ENCODE measurements at regions of chr20 and their contacts with region 1.

Region 1: DNA sequence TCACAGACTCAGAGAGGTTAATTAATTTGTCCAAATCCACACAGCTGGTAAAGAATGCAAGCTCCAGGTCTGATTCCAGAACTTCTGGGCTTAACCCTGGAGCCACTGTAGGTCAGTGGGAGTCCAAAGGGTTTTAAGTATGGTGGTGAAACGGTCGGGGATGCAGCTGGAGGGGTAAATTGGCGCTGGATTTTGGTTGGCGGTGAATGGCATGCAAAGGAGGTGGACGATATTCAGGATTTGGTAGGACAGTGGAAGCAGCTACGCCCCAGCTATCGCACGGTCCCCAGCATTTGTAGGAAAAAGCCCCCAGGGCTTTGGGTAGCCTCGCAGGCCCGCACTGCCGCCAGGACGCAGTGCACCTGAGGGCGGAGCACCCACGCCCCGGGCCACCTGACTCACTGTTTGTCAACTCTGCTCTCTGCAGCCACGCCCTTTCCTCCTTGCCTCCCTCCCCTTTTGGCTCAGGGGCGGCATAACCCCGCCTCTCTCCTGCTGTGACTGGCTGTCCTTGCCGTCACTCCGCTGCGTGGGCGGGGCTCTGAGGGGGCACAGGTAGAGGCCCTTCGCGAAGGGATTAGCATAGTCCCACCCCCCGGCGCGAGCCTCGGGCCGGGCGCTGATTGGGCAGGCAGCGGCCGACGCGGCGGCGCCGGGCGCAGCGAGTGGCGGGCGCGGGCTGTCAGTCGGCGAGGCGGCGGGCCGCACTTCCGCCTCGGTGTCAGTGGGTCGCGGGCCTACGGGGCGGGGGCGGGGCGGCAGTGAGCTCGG is at the start of gene OSBPL2:
- DNase-seq: peak; percentile 97 to 99 (median 99)
- H3K4me3 ChIP-seq: peak within 1 kb of the TSS; percentile 64 to 82 (median 70)
- H3K4me3 Mint-ChIP-seq: peak within 1 kb of the TSS; percentile 82 to 93
- H3K27ac ChIP-seq: peak within 1 kb of the TSS; percentile 32 to 79
- H3K27ac Mint-ChIP-seq: peak within 1 kb of the TSS; percentile 71 to 93 (median 83)
- H3K4me1 ChIP-seq: peaks cover 28 to 38% of the 10 kb centered on the region in 2 donors
- H3K4me1 Mint-ChIP-seq: peaks cover 34% of the 10 kb centered on the region
- H3K27me3 ChIP-seq: no peaks in the 10 kb centered on the region
- H3K27me3 Mint-ChIP-seq: peaks cover 1 to 3% (median 2%) of the 10 kb centered on the region in 3 donors
- CTCF ChIP-seq: no peak
- polyA plus RNA-seq, gene OSBPL2: 12.9 to 29.1 (median 17.9) TPM

Region 2: DNA sequence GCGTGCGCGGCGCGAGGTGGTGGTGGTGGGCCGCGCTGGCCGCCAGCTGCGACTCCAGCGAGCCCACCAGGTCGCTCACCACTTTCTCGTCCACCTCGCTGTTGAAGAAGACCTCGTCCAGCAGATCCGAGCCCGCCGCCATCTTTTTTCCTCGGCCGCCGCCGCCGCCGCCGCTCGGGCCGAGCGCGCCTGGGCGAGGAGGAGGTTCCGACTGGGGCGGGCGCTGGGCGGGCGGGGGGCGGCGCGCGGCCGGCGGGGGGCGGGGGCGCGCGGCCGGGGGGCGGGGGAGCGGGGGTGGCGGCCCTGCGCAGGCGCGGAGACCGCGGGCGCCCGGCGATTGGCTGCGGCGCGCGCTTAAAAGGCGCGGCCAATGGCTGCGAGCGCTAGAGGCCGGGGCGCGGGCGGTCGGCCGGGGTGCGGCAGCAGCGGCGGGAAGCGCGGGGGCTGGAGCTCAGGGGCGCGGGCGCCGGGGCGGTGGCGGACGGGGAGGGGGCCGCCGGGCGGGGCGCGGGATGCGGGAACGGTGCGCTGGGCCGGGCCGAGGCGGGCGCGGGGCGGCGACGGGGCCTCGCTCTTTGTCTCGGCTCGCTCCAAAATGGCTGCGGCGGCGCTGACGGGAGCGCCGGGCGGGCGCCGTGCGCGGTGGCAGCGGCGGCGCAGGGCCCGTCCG is 172.2 kb before region 1 on chr20 and contains the start of gene TAF4:
- intact Hi-C with region 1: loop called in 1 of 2 experiments (anchors 10 kb)
- DNase-seq: peak; percentile 68 to 84 (median 79)
- H3K4me3 ChIP-seq: peak within 1 kb of the TSS; percentile 62 to 89 (median 89)
- H3K4me3 Mint-ChIP-seq: peak within 1 kb of the TSS; percentile 87 to 96
- H3K27ac ChIP-seq: peak within 1 kb of the TSS in 1 of 2 donors; percentile 68
- H3K27ac Mint-ChIP-seq: peak within 1 kb of the TSS in 6 of 7 donors; percentile 53 to 90 (median 80)
- H3K4me1 ChIP-seq: peaks cover 44 to 53% of the 10 kb centered on the region in 2 donors
- H3K4me1 Mint-ChIP-seq: peaks cover 49% of the 10 kb centered on the region
- H3K27me3 ChIP-seq: no peaks in the 10 kb centered on the region
- H3K27me3 Mint-ChIP-seq: peaks cover 4 to 21% (median 4%) of the 10 kb centered on the region in 3 donors
- CTCF ChIP-seq: no peak
- polyA plus RNA-seq, gene TAF4: 0.48 to 14.9 (median 0.99) TPM

Region 3: DNA sequence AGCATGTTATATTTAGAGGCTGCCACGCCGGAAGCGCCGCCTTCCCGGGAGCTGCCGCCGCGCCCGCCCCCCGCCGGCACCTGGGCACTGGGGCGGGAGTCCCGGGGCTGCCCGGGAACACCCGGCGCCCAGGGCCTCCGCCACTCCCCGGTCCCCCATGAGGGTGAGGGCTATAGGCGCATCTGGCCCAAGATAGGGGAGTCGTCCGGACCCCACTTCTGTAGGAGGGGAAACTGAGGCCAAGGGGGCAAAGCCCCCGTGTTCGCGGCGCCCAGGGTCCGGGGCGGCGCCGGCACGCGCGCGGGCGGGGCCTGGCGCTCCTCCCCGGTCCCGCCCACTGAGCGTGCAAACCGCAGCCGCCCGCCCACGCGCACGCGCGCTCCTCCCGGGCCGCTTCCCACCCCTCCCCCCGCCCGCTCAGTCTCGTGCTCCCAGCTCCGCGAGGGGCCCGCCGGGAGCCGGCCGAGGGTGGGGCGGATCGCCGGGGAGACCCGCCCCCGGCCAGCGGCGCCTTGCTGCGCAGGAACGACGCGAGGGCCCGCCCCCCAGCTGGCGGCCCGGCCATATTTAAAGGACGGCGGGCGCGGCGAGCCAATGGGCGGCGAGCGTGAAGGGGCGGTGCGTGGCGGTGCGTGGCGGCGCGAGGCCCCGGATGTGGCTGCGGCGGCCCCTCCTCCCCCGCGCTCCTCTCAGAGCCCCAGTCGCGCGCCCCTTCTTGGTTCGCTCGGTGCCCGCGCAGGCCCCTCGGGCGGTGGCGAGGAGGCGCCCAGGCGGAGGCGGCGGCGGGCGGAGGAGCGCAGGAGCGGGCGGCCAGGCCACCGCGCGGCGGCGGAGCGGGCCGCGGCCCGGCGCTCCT is 116.0 kb before region 1 on chr20 and contains the start of gene LSM14B:
- intact Hi-C with region 1: loop called in 1 of 2 experiments (anchors 5 kb)
- DNase-seq: peak; percentile 94 to 97 (median 96)
- H3K4me3 ChIP-seq: peak within 1 kb of the TSS; percentile 52 to 87 (median 71)
- H3K4me3 Mint-ChIP-seq: peak within 1 kb of the TSS; percentile 85 to 93
- H3K27ac ChIP-seq: peak within 1 kb of the TSS; percentile 65 to 94
- H3K27ac Mint-ChIP-seq: peak within 1 kb of the TSS; percentile 88 to 95 (median 93)
- H3K4me1 ChIP-seq: peaks cover 17 to 27% of the 10 kb centered on the region in 2 donors
- H3K4me1 Mint-ChIP-seq: peaks cover 19% of the 10 kb centered on the region
- H3K27me3 ChIP-seq: peaks cover 0 to 5% of the 10 kb centered on the region in 2 donors
- H3K27me3 Mint-ChIP-seq: peaks cover 9 to 24% (median 18%) of the 10 kb centered on the region in 3 donors
- CTCF ChIP-seq: no peak
- polyA plus RNA-seq, gene LSM14B: 1.0 to 33.5 (median 1.4) TPM

Region 4: GRCh38 chr20:62171245-62171644 is 66.7 kb before region 1 on chr20:
- intact Hi-C with region 1: no loop called
- DNase-seq: no peak
- H3K4me3 ChIP-seq: no peak overlapping the region
- H3K4me3 Mint-ChIP-seq: no peak overlapping the region
- H3K27ac ChIP-seq: no peak overlapping the region
- H3K27ac Mint-ChIP-seq: peak overlapping the region in 2 of 7 donors; percentile 8 to 73
- H3K4me1 ChIP-seq: no peaks in the 10 kb centered on the region
- H3K4me1 Mint-ChIP-seq: no peaks in the 10 kb centered on the region
- H3K27me3 ChIP-seq: no peaks in the 10 kb centered on the region
- H3K27me3 Mint-ChIP-seq: peaks cover 0 to 2% (median 0%) of the 10 kb centered on the region in 3 donors
- CTCF ChIP-seq: no peak

Region 5: GRCh38 chr20:62182613-62183425 is 55.2 kb before region 1 on chr20 and contains the start of gene MTG2:
- intact Hi-C with region 1: loop called (anchors 5 kb)
- DNase-seq: peak; percentile 96 to 97 (median 96)
- H3K4me3 ChIP-seq: peak within 1 kb of the TSS; percentile 77 to 99 (median 84)
- H3K4me3 Mint-ChIP-seq: peak within 1 kb of the TSS; percentile 87 to 91
- H3K27ac ChIP-seq: peak within 1 kb of the TSS; percentile 57 to 92
- H3K27ac Mint-ChIP-seq: peak within 1 kb of the TSS; percentile 89 to 96 (median 93)
- H3K4me1 ChIP-seq: peaks cover 20 to 31% of the 10 kb centered on the region in 2 donors
- H3K4me1 Mint-ChIP-seq: peaks cover 43% of the 10 kb centered on the region
- H3K27me3 ChIP-seq: no peaks in the 10 kb centered on the region
- H3K27me3 Mint-ChIP-seq: peaks cover 0 to 2% (median 0%) of the 10 kb centered on the region in 3 donors
- CTCF ChIP-seq: no peak
- polyA plus RNA-seq, gene MTG2: 10.8 to 16.1 (median 14.9) TPM

Region 6: GRCh38 chr20:62407221-62407992 is 169.4 kb after region 1 on chr20 and contains the start of gene CABLES2:
- intact Hi-C with region 1: loop called in 1 of 2 experiments (anchors 10 kb)
- DNase-seq: peak; percentile 89 to 92 (median 90)
- H3K4me3 ChIP-seq: peak within 1 kb of the TSS; percentile 52 to 79 (median 54)
- H3K4me3 Mint-ChIP-seq: peak within 1 kb of the TSS; percentile 82 to 89
- H3K27ac ChIP-seq: peak within 1 kb of the TSS; percentile 6 to 74
- H3K27ac Mint-ChIP-seq: peak within 1 kb of the TSS in 6 of 7 donors; percentile 74 to 86 (median 81)
- H3K4me1 ChIP-seq: peaks cover 30 to 41% of the 10 kb centered on the region in 2 donors
- H3K4me1 Mint-ChIP-seq: peaks cover 34% of the 10 kb centered on the region
- H3K27me3 ChIP-seq: peaks cover 0 to 3% of the 10 kb centered on the region in 2 donors
- H3K27me3 Mint-ChIP-seq: peaks cover 12 to 17% (median 13%) of the 10 kb centered on the region in 3 donors
- CTCF ChIP-seq: no peak
- polyA plus RNA-seq, gene CABLES2: 0.60 to 4.0 (median 0.61) TPM

Region 7: GRCh38 chr20:62937366-62938104 is 699.5 kb after region 1 on chr20:
- intact Hi-C with region 1: loop called in 1 of 2 experiments (anchors 5 kb)
- DNase-seq: peak; percentile 94 to 97 (median 97)
- H3K4me3 ChIP-seq: peak overlapping the region; percentile 94 to 99 (median 97)
- H3K4me3 Mint-ChIP-seq: peak overlapping the region; percentile 92 to 96
- H3K27ac ChIP-seq: peak overlapping the region; percentile 59 to 88
- H3K27ac Mint-ChIP-seq: peak overlapping the region; percentile 78 to 96 (median 90)
- H3K4me1 ChIP-seq: peaks cover 27 to 36% of the 10 kb centered on the region in 2 donors
- H3K4me1 Mint-ChIP-seq: peaks cover 28% of the 10 kb centered on the region
- H3K27me3 ChIP-seq: no peaks in the 10 kb centered on the region
- H3K27me3 Mint-ChIP-seq: peaks cover 0 to 1% (median 0%) of the 10 kb centered on the region in 3 donors
- CTCF ChIP-seq: no peak

Measured in CD14-positive monocyte (primary cell).